Caco-2 (cell line): ENCODE measurements at regions of chr4 and their contacts with region 1.

Region 1: GRCh38 chr4:127788517-127788916 is 6.4 kb downstream of the HSPA4L start:
- DNase-seq: peak in 1 of 2 experiments; percentile 35
- H3K4me3 ChIP-seq: no peak overlapping the region
- H3K4me3 Mint-ChIP-seq: no peak overlapping the region
- H3K27ac Mint-ChIP-seq: no peak overlapping the region
- H3K4me1 ChIP-seq: peaks cover 7% of the 10 kb centered on the region; the same call in 1 of the 2 replicates
- H3K4me1 Mint-ChIP-seq: no peaks in the 10 kb centered on the region
- H3K27me3 ChIP-seq: no peaks in the 10 kb centered on the region
- H3K27me3 Mint-ChIP-seq: no peaks in the 10 kb centered on the region
- CTCF ChIP-seq: peak; percentile 33 to 43

Region 2: GRCh38 chr4:127555106-127555505 is 233.4 kb before region 1 on chr4:
- CTCF ChIA-PET with region 1: no interaction called
- POLR2A ChIA-PET with region 1: no interaction called
- intact Hi-C with region 1: no loop called
- DNase-seq: no peak
- H3K4me3 ChIP-seq: no peak overlapping the region
- H3K4me3 Mint-ChIP-seq: no peak overlapping the region
- H3K27ac Mint-ChIP-seq: no peak overlapping the region
- H3K4me1 ChIP-seq: no peaks in the 10 kb centered on the region
- H3K4me1 Mint-ChIP-seq: no peaks in the 10 kb centered on the region
- H3K27me3 ChIP-seq: no peaks in the 10 kb centered on the region
- H3K27me3 Mint-ChIP-seq: no peaks in the 10 kb centered on the region
- CTCF ChIP-seq: no peak

Region 3: GRCh38 chr4:127604949-127605709 is 183.4 kb before region 1 on chr4:
- CTCF ChIA-PET with region 1: no interaction called
- POLR2A ChIA-PET with region 1: no interaction called
- intact Hi-C with region 1: loop called (anchors 1 kb)
- DNase-seq: no peak
- H3K4me3 ChIP-seq: no peak overlapping the region
- H3K4me3 Mint-ChIP-seq: no peak overlapping the region
- H3K27ac Mint-ChIP-seq: no peak overlapping the region
- H3K4me1 ChIP-seq: no peaks in the 10 kb centered on the region; the same call in 1 of the 2 replicates
- H3K4me1 Mint-ChIP-seq: no peaks in the 10 kb centered on the region
- H3K27me3 ChIP-seq: no peaks in the 10 kb centered on the region
- H3K27me3 Mint-ChIP-seq: peaks cover 2% of the 10 kb centered on the region
- CTCF ChIP-seq: peak in 1 of 2 experiments; percentile 40